ENCODE measurements at regions of chr2 and their contacts with region 1.

Region 1: GRCh38 chr2:203535078-203535783 is at the start of gene RAPH1:
- DNase-seq: peak; percentile 89
- total RNA-seq, gene RAPH1: 20.6 TPM

Region 2: GRCh38 chr2:203636588-203637470 is 101.6 kb after region 1 on chr2:
- intact Hi-C with region 1: no loop called
- DNase-seq: no peak

Region 3: GRCh38 chr2:203650860-203651613 is 115.8 kb after region 1 on chr2:
- intact Hi-C with region 1: loop called (anchors 5 kb)
- DNase-seq: no peak

Region 4: GRCh38 chr2:203782262-203782976 is 247.2 kb after region 1 on chr2:
- intact Hi-C with region 1: loop called (anchors 10 kb)
- DNase-seq: no peak

Measured in cardiac septum (tissue), 1 donor.